Thyroid gland (tissue), 4 donors: ENCODE measurements at regions of chr11 and their contacts with region 1.

Region 1: DNA sequence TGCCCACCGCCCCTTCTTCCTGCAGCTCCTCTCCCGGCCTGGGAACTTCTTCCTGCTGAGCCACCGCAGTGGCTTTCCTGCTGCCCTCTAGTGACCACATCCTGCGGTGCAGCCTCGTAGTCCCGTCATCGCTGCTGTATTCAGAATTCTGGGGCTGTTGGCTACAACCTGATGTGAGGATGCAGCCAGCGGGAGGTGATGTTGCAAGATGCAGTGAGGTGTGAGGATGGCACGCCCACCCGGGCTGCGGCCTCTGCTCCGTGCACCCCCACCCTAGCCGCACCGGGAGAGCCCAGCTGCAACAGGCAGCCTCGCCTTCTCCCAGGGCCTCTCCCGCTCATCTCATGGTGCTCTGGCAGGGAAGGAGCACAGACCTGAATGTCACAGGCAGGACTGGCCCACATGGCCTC is 10.1 kb downstream of the CHST1 start:
- DNase-seq: peak; percentile 82 to 84
- H3K4me3 ChIP-seq: no peak overlapping the region
- H3K27ac ChIP-seq: no peak overlapping the region
- H3K4me1 ChIP-seq: peaks cover 17 to 29% of the 10 kb centered on the region in 2 donors
- H3K27me3 ChIP-seq: no peaks in the 10 kb centered on the region
- CTCF ChIP-seq: peak; percentile 66 to 96 (median 88)
- POLR2A ChIP-seq: no peak

Region 2: DNA sequence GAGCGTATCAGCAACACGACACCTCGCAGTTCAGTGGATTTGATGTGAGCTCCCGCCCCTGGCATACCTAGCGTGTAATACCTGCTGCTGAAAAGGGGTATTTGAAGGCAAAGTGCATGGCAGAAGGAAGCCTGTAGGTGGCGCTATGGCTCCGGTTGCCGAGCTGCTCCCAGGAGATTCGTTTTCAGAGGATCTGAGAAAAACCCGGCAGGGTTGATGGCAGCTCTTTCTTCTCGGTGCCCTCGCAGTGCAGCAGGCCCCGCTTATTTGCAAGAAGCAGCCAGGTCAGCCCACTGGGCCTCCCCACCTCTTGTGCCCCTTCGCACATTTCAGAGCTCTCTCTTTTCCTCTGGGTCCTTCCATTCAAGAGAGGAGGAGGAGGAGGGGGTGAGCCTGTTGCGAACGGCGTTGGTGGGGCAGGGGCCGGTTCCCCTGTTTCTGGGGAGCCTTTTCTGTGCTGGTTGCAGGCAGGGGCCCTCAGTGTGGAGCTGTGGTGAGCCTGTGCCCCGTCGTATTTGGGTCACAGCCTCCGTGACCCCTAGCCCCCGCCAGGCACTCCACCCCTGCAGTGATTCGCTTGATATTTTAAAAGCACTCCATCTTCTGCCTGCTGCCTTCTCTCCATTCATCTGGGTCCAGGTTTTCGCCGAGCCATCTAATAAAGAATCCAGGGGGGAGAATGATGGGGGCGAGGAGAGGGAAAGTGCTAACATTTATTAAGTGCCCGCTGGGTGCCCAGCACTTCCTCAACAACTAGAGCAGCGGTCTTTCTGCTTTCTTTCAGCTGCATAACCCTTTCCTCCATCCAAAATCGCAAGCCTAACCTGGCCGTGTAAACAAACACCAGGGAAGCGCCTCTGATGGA is 283.9 kb before region 1 on chr11:
- intact Hi-C with region 1: loop called (anchors 10 kb)
- DNase-seq: peak; percentile 77 to 79
- H3K4me3 ChIP-seq: no peak overlapping the region
- H3K27ac ChIP-seq: no peak overlapping the region
- H3K4me1 ChIP-seq: peaks cover 0 to 7% of the 10 kb centered on the region in 2 donors
- H3K27me3 ChIP-seq: no peaks in the 10 kb centered on the region
- CTCF ChIP-seq: peak; percentile 74 to 98 (median 88)
- POLR2A ChIP-seq: no peak

Region 3: GRCh38 chr11:45411228-45411946 is 244.0 kb before region 1 on chr11:
- intact Hi-C with region 1: loop called (anchors 5 kb)
- DNase-seq: no peak
- H3K4me3 ChIP-seq: no peak overlapping the region
- H3K27ac ChIP-seq: no peak overlapping the region
- H3K4me1 ChIP-seq: peaks cover 0 to 9% of the 10 kb centered on the region in 2 donors
- H3K27me3 ChIP-seq: no peaks in the 10 kb centered on the region
- CTCF ChIP-seq: no peak
- POLR2A ChIP-seq: no peak

Region 4: DNA sequence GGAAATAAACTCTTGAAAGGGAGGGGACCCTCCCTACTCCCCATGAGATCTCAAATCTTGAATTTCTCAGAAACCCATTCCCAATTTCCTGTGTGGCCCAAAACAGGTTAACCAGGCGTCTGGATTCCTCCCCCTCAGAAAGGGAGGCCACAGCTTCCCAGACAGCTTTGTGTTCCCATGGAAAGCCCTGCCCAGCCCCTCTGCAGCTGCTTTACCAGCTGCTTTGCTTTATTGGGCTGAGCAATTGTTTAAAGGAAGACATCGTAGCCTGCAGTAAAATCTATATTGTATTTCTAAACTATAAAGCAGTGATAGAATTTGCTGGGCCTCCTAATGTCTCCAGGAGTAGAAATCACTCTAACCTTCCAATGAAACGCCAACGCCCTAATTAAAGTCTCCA is 87.3 kb before region 1 on chr11:
- intact Hi-C with region 1: loop called (anchors 5 kb)
- DNase-seq: no peak
- H3K4me3 ChIP-seq: no peak overlapping the region
- H3K27ac ChIP-seq: no peak overlapping the region
- H3K4me1 ChIP-seq: peaks cover 4% of the 10 kb centered on the region in 2 donors
- H3K27me3 ChIP-seq: no peaks in the 10 kb centered on the region
- CTCF ChIP-seq: no peak
- POLR2A ChIP-seq: no peak